Ovary (tissue), 10 donors: ENCODE measurements at regions of chr17 and their contacts with region 1.

Region 1: DNA sequence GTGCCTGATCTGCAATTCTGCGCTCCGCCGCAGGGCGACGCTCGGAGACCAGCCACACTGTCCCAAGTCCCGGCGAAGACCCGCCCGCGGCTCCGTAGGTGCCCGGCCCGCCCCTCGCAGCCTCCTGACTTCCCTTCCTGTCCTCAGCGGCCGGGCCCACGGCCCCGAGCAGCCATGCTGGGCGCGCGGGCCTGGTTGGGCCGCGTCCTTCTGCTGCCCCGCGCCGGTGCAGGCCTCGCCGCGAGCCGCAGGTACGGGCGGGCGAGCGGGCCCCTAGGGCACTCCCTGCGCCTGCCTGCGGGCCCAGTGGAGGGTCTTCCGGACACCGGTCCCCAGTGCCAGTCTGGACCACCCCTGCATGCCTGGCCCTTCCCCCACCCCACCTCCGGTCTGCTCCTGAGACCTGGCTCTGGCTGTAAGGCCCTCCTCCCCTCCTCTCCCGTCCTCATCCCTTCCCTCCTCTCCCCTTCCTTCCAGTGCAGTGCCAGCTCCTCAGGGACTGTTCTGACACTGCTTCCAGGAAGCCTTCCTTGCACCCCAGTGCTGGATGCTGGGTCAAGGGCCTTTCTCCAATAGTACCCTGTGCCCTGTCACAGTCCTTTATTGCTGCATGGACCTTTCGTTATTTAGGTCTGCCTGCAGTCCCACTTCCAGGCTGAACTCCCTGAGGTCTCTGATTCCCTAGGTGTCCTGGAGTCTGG is at the start of gene SPATA20:
- DNase-seq: peak; percentile 92 to 95 (median 93)
- H3K4me3 ChIP-seq: peak within 1 kb of the TSS; percentile 63
- H3K27ac ChIP-seq: peak within 1 kb of the TSS; percentile 29 to 90
- H3K4me1 ChIP-seq: peaks cover 9% of the 10 kb centered on the region
- H3K27me3 ChIP-seq: no peaks in the 10 kb centered on the region
- CTCF ChIP-seq: peak; percentile 97 to 99 (median 99)
- EP300 ChIP-seq: no peak
- POLR2A ChIP-seq: peak; percentile 74
- total RNA-seq, gene SPATA20: 53.7 to 81.2 (median 62.6) TPM

Region 2: DNA sequence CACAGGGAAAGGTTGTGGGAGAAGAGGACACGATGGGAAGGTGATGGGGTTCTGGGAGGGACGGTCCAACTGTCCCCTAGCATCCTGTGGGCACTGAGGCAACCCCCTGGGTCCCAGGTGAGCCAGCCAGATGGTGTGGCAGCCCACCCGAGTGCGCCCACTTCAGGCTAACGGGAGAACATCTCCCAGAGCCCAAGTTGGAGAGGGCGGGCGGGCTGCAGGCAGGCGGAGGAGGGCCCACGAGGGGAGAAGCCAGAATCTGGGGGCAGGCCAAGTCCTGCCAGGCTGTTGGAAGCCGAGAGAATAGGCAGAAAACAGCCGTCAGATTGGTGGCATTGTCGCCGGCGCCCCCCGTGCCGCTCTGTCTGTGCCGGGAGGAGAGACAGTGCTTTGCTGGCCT is 73.7 kb after region 1 on chr17:
- intact Hi-C with region 1: loop called (anchors 2 to 5 kb)
- DNase-seq: no peak
- H3K4me3 ChIP-seq: no peak overlapping the region
- H3K27ac ChIP-seq: no peak overlapping the region
- H3K4me1 ChIP-seq: peaks cover 3% of the 10 kb centered on the region
- H3K27me3 ChIP-seq: no peaks in the 10 kb centered on the region
- CTCF ChIP-seq: no peak
- EP300 ChIP-seq: no peak
- POLR2A ChIP-seq: no peak

Region 3: DNA sequence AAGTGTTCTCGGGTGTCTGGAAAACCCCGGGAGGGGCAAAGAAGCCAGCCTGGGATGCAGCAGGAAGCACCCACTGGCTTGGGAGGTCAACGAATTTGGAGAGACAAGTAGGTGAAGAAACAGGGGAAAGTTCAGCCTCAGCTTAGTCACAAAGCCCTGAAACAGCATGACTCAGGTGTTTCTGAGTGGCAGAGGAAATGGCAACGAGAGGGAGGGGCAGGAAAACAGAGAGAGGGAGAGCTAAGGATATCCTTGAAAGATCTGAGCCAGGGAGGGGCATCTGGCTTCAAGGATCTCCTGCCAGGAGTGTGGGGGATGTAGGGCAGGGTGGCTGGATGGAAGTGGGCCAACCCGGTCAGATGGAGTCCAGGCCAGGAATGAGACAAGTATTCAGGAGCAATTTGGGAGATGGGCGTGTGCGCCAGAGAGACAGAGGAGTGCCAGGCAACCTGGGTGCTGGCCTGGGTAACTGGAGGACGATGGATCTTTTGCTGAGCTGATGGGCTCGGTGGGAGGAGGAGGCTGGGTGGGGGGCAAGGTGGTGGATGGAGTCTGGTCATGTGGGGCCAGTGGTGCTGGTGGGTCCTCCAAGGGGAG is 114.7 kb after region 1 on chr17:
- intact Hi-C with region 1: no loop called
- DNase-seq: peak in 1 of 5 donors; percentile 35
- H3K4me3 ChIP-seq: no peak overlapping the region
- H3K27ac ChIP-seq: no peak overlapping the region
- H3K4me1 ChIP-seq: peaks cover 2% of the 10 kb centered on the region
- H3K27me3 ChIP-seq: no peaks in the 10 kb centered on the region
- CTCF ChIP-seq: no peak
- EP300 ChIP-seq: no peak
- POLR2A ChIP-seq: no peak

Region 4: DNA sequence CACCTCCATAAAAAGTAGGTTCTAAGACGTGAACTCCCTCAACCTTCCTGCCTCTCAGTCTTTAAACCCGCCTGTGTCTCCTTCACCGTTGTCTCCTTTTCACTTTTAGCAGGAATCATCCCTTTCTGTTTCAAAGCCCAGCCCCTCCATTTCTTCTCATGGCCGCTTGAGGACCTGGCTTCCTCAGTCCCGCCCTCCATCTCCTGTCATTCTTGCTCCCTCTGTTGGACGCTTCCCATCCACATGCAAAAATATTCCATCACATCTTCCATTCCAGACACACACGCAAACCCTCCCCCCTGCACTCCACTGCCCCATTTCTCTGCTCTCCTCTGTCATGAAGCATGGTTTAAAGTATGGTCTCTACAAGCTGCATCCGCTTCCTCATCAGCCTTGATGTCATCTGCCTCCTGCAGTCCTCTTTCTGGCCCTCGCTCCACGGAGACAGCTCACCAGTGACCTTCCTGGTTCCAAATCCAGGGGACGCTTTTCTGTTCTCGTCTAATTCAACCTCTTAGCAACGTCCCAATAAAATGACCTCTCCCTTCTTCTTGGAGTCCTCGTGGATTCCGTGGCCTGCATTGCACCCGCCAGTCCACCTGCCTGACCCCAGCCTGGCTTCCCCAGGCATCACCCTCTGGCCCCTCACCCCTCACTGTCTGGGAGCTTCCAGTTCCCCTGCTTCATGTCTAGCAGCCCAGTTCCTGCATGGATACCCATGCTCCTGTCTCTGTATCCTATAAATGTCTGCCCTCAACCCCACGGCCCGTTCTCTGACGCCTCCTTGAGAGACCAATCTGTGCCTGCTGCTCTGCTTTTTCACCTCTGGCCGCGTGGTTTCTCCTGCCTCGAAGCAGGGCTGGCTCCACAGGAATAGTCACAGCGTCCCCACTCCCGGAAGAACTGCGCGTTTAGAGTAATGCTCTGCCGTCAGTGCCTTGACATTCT is 134.4 kb after region 1 on chr17:
- intact Hi-C with region 1: loop called in 2 of 4 experiments (anchors 5 kb)
- DNase-seq: peak in 2 of 5 donors; percentile 59 to 71
- H3K4me3 ChIP-seq: no peak overlapping the region
- H3K27ac ChIP-seq: no peak overlapping the region
- H3K4me1 ChIP-seq: peaks cover 9% of the 10 kb centered on the region
- H3K27me3 ChIP-seq: no peaks in the 10 kb centered on the region
- CTCF ChIP-seq: peak in 2 of 3 donors; percentile 63 to 64
- EP300 ChIP-seq: no peak
- POLR2A ChIP-seq: no peak

Region 5: DNA sequence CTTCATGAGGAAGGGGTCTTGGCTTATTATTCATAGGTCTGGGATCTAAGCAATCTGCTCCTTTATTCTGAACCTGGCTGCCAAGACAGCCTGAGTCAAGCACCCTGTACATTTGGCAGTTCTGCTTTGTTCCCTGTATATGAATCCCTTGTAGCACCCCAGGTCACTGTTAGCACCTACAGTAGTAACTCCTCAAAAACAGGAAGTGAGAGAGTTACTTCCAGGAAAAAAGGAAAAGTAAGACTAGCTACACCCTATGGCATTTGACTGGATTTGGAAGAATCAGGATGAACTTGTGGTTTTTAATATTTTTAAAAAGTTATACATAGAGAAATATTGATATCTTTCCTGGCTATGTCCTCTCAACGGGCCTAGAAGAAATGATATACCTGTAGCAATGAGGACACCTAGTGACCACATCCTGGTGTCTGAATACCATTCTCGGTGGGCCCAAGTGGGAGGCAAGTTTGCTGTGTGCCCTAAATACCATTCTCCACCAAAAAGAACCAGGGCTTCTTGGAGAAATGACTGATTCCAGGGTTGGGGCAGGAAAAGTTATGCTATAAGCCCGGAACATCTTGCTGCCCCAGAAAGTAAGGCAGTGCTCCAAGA is 150.6 kb after region 1 on chr17:
- intact Hi-C with region 1: loop called in 3 of 4 experiments (anchors 5 kb)
- DNase-seq: no peak
- H3K4me3 ChIP-seq: no peak overlapping the region
- H3K27ac ChIP-seq: no peak overlapping the region
- H3K4me1 ChIP-seq: peaks cover 4% of the 10 kb centered on the region
- H3K27me3 ChIP-seq: no peaks in the 10 kb centered on the region
- CTCF ChIP-seq: no peak
- EP300 ChIP-seq: no peak
- POLR2A ChIP-seq: no peak

Region 6: DNA sequence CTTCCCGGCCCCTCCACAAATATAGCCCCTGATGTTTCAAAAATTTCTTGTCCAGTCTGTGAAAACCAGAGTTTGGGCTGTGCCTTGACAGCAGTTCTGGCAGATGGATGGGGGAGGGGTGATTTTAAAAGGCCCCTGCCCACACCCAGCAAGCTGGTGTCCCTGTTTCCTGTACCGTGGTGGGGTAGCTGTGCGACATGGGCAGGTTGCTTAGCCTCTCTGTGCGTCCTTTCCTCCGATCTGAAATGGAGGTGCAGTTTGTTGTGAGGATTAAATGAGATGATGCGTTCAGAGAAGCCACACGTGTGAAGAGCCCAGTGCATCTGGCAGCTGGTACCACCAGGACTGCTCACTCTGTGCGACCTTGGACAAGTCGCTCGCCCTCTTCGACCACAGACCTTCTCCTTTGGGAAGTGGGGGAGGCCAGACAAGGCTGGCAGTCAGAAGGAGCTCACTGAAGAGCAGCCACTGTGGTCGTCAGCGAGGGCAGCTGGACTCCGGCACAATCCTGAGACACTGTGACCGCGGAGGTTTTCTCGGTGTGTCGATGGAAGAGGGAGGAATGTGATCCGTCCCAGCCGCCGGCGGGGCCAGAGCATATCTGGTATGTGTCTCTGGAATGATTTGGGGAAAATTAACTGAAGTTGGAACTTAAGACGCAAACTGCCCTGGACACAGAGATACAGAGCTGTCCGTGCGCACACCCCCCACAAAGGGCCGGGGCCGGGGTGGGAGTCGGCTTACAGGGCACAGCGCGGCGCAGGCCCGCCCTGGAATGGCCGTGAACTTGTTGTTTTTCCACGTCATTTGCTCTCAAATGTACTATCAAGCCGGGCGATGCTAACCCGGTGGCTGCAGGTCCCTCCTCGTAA is 287.5 kb after region 1 on chr17:
- intact Hi-C with region 1: loop called in 2 of 4 experiments (anchors 5 to 10 kb)
- DNase-seq: peak in 2 of 5 donors; percentile 93 to 95
- H3K4me3 ChIP-seq: peak overlapping the region; percentile 31
- H3K27ac ChIP-seq: peak overlapping the region; percentile 73 to 92
- H3K4me1 ChIP-seq: peaks cover 22% of the 10 kb centered on the region
- H3K27me3 ChIP-seq: no peaks in the 10 kb centered on the region
- CTCF ChIP-seq: no peak
- EP300 ChIP-seq: no peak
- POLR2A ChIP-seq: peak; percentile 46